ENCODE measurements at regions of chr11 and their contacts with region 1.

Region 1: GRCh38 chr11:111586388-111586831 is 15.8 kb upstream of the SIK2 start:
- DNase-seq: peak; percentile 61
- H3K4me3 ChIP-seq: no peak overlapping the region
- H3K27ac ChIP-seq: no peak overlapping the region
- H3K27me3 ChIP-seq: no peaks in the 10 kb centered on the region
- CTCF ChIP-seq: peak; percentile 62

Region 2: GRCh38 chr11:111283945-111284481 is 302.4 kb before region 1 on chr11:
- in situ Hi-C with region 1: no loop called
- DNase-seq: no peak
- H3K4me3 ChIP-seq: no peak overlapping the region
- H3K27ac ChIP-seq: no peak overlapping the region
- H3K27me3 ChIP-seq: no peaks in the 10 kb centered on the region
- CTCF ChIP-seq: no peak

Region 3: GRCh38 chr11:111841370-111842053 is 255.1 kb after region 1 on chr11:
- in situ Hi-C with region 1: loop called (anchors 25 kb)
- DNase-seq: peak; percentile 95
- H3K4me3 ChIP-seq: no peak overlapping the region
- H3K27ac ChIP-seq: peak overlapping the region; percentile 86
- H3K27me3 ChIP-seq: no peaks in the 10 kb centered on the region
- CTCF ChIP-seq: peak; percentile 84

Measured in brain microvascular endothelial cell (primary cell).